Activated CD4-positive, alpha-beta T cell treated with anti-CD3 and anti-CD28 coated beads for 36 hours (primary cell): ENCODE measurements at regions of chr17 and their contacts with region 1.

Region 1: GRCh38 chr17:4709794-4710692 is at the start of gene ARRB2:
- DNase-seq: peak; percentile 99
- ATAC-seq: peak; percentile 83
- H3K4me3 Mint-ChIP-seq: peak within 1 kb of the TSS; percentile 82
- H3K27ac Mint-ChIP-seq: peak within 1 kb of the TSS; percentile 90
- H3K4me1 Mint-ChIP-seq: peaks cover 52% of the 10 kb centered on the region
- H3K27me3 Mint-ChIP-seq: no peaks in the 10 kb centered on the region
- total RNA-seq, gene ARRB2: 168 to 175 TPM

Region 2: GRCh38 chr17:3723556-3724369 is 986.3 kb before region 1 on chr17 and contains the start of gene HASPIN:
- CTCF ChIA-PET with region 1: no interaction called
- POLR2A ChIA-PET with region 1: no interaction called
- intact Hi-C with region 1: loop called in 1 of 2 experiments (anchors 10 kb)
- DNase-seq: peak; percentile 96
- ATAC-seq: peak; percentile 86
- H3K4me3 Mint-ChIP-seq: peak within 1 kb of the TSS; percentile 83
- H3K27ac Mint-ChIP-seq: peak within 1 kb of the TSS; percentile 93
- H3K4me1 Mint-ChIP-seq: peaks cover 58% of the 10 kb centered on the region
- H3K27me3 Mint-ChIP-seq: no peaks in the 10 kb centered on the region
- total RNA-seq, gene HASPIN: 21.0 to 25.2 TPM

Region 3: DNA sequence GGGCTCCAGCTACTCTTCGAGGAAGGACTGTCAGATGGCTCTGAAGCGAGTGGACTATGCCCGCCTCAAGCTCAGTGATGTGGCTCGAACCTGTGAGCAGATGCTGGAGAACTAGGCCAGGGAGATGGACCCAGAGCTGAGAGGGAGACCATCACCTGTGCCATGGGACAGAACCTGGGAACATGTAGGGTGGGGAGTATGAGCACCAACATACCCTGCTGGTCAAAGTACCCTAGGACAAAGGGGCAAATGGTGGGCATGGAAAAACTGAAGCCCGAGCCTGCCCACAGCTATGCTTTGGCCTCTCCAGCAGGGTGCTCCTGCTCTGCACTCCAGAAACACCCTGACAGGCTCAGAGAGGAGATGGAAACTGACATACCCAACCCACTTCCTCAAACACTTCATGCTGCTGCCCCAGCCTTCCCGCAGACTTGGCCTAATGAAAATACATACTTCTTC is 23.1 kb after region 1 on chr17:
- CTCF ChIA-PET with region 1: no interaction called
- POLR2A ChIA-PET with region 1: interaction called, 3 read pairs
- intact Hi-C with region 1: loop called (anchors 1 kb)
- DNase-seq: no peak
- ATAC-seq: no peak
- H3K4me3 Mint-ChIP-seq: no peak overlapping the region
- H3K27ac Mint-ChIP-seq: peak overlapping the region; percentile 17
- H3K4me1 Mint-ChIP-seq: peaks cover 39% of the 10 kb centered on the region
- H3K27me3 Mint-ChIP-seq: peaks cover under 1% of the 10 kb centered on the region

Region 4: DNA sequence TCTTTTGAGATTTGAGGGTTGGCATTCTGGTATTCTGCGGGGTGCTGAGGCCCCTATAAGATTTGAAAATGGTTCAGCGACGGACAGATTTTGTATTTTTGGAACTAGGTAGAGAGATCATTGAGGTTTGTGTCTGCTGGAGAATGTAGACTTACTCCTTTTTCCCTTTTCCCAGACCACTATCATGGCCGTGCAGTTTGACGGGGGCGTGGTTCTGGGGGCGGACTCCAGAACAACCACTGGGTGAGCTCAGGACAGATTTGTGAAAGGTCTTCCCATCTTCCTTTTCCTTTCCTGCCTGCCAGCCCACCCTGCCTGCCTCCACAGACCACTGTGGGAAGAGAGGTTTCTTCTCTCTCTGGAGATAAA is 86.5 kb after region 1 on chr17:
- CTCF ChIA-PET with region 1: interaction called, 3 read pairs
- POLR2A ChIA-PET with region 1: interaction called, 3 read pairs
- intact Hi-C with region 1: loop called in 1 of 2 experiments (anchors 1 kb)
- DNase-seq: peak; percentile 58
- ATAC-seq: no peak
- H3K4me3 Mint-ChIP-seq: peak overlapping the region; percentile 94
- H3K27ac Mint-ChIP-seq: peak overlapping the region; percentile 97
- H3K4me1 Mint-ChIP-seq: peaks cover 24% of the 10 kb centered on the region
- H3K27me3 Mint-ChIP-seq: peaks cover 3% of the 10 kb centered on the region

Region 5: GRCh38 chr17:4833178-4833940 is 123.3 kb after region 1 on chr17 and contains the start of gene MINK1:
- CTCF ChIA-PET with region 1: no interaction called
- POLR2A ChIA-PET with region 1: no interaction called
- intact Hi-C with region 1: loop called (anchors 1 kb)
- DNase-seq: peak; percentile 92
- ATAC-seq: peak; percentile 93
- H3K4me3 Mint-ChIP-seq: peak within 1 kb of the TSS; percentile 90
- H3K27ac Mint-ChIP-seq: peak within 1 kb of the TSS; percentile 91
- H3K4me1 Mint-ChIP-seq: peaks cover 28% of the 10 kb centered on the region
- H3K27me3 Mint-ChIP-seq: no peaks in the 10 kb centered on the region
- total RNA-seq, gene MINK1: 48.2 to 57.7 TPM

Region 6: DNA sequence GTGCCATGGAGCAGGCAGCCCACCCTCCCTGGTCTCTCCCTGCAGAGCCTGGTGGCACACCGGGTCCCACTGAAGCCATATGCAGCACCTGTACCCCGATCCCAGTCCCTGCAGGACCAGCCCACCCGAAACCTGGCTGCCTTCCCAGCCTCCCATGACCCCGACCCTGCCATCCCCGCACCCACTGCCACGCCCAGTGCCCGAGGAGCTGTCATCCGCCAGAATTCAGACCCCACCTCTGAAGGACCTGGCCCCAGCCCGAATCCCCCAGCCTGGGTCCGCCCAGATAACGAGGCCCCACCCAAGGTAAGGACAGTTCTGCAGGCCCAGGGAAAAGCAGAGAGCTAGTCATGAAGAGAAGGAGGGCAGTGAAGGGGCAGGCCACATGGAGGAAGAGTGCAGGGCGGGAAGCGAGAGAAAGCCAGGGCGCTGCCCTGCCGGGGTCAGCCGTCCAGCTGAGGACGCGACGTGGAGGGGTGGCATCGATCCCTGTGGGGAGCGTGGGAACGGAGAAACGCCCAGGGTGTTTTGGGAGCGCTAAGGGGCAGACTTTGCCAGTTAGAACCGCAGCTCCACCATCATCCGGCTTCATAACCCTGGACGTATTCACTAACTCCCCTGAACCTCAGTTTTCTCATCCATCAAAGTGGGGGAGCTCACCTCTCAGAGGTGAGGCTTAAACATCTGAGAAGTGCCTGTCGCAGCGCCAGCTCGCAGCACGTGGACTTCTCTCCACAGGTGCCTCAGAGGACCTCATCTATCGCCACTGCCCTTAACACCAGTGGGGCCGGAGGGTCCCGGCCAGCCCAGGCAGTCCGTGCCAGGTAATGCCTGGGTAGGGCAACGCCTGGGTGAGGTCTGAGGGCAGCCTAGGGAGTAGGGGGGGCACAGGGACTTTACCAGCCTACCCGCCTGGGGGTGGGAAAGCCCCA is 181.6 kb after region 1 on chr17:
- CTCF ChIA-PET with region 1: interaction called, 3 read pairs
- POLR2A ChIA-PET with region 1: no interaction called
- intact Hi-C with region 1: loop called (anchors 1 to 2 kb)
- DNase-seq: no peak
- ATAC-seq: no peak
- H3K4me3 Mint-ChIP-seq: no peak overlapping the region
- H3K27ac Mint-ChIP-seq: no peak overlapping the region
- H3K4me1 Mint-ChIP-seq: no peaks in the 10 kb centered on the region
- H3K27me3 Mint-ChIP-seq: no peaks in the 10 kb centered on the region

Region 7: DNA sequence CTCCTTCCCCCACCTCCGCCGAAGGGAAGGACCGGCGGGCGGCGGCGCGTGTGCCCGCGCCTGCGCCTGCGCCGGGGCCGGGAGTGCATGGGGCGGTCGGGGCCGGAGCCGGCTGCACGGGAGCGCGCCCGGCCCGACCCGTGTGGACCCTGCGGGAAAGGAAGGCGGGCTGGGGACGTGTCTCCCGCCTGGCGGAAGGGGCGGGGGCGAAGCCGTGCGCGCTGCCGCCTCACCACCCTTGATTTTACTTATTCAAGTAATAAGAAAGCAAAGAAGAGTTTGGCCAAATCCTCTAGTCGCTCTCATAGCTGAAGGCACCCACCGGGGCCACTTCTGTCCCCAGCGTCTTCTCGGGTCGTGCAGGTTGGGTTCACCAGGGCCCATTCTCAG is 238.9 kb after region 1 on chr17:
- CTCF ChIA-PET with region 1: no interaction called
- POLR2A ChIA-PET with region 1: interaction called, 3 read pairs
- intact Hi-C with region 1: loop called (anchors 1 kb)
- DNase-seq: peak; percentile 88
- ATAC-seq: peak; percentile 39
- H3K4me3 Mint-ChIP-seq: peak overlapping the region; percentile 99
- H3K27ac Mint-ChIP-seq: peak overlapping the region; percentile 100
- H3K4me1 Mint-ChIP-seq: peaks cover 34% of the 10 kb centered on the region
- H3K27me3 Mint-ChIP-seq: no peaks in the 10 kb centered on the region